PC-3 (cell line): ENCODE measurements at regions of chr18 and their contacts with region 1.

Region 1: GRCh38 chr18:6747646-6748045 is 18.1 kb downstream of the ARHGAP28 start:
- DNase-seq: peak; percentile 95
- ATAC-seq: peak; percentile 98
- H3K4me3 ChIP-seq: no peak overlapping the region
- H3K27ac ChIP-seq: peak overlapping the region; percentile 46
- H3K4me1 ChIP-seq: peaks cover 31% of the 10 kb centered on the region
- H3K27me3 ChIP-seq: no peaks in the 10 kb centered on the region
- CTCF ChIP-seq: no peak

Region 2: DNA sequence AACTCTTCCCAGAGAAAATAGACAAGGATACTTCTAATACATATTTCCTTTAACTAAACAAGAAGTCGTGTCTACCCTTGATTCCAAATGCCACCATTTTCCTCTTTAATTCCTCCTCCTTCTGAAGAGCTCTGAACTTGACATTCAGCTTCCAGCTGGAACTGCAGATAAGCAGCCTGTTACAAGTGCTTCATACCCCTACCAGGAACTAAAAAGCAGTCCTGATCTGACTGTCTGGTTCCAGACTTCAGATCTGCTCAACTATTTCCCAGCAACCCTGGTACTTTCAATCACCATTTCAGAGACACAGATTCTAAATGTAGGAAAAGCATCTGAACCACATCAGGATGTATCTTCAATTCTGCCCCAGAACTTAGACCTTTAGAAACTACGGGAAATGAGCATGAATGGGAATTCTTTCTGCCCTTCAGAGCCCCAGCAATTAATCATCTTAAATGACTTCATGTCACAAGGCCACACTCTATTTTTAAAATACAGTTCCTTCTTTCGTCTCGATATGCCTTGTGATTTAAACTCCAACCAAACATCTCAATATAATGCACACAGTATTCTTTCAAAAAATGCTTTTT is 492.4 kb before region 1 on chr18:
- CTCF ChIA-PET with region 1: no interaction called
- POLR2A ChIA-PET with region 1: no interaction called
- intact Hi-C with region 1: no loop called
- DNase-seq: no peak
- ATAC-seq: no peak
- H3K4me3 ChIP-seq: no peak overlapping the region
- H3K27ac ChIP-seq: no peak overlapping the region
- H3K4me1 ChIP-seq: no peaks in the 10 kb centered on the region
- H3K27me3 ChIP-seq: no peaks in the 10 kb centered on the region
- CTCF ChIP-seq: no peak

Region 3: DNA sequence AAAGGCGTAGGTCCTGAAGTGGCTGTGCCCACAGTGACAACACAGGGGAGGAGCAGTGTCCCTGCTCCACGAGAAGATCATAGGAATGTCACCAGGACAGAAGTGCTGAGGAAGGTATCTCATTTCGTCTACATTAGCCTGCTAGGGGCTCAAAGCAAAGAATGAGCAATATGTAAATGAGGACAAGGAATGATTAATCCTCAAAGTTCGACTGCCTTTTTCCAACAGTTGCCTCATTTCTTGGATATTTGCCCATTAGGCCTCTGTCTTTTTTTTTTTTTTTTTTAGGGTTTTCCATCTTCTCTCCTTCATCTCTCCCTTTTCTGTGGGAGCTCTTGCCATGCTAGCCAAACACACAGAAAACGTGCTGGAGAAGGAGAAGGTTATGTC is 123.4 kb before region 1 on chr18:
- CTCF ChIA-PET with region 1: no interaction called
- POLR2A ChIA-PET with region 1: no interaction called
- intact Hi-C with region 1: no loop called
- DNase-seq: peak; percentile 74
- ATAC-seq: peak; percentile 93
- H3K4me3 ChIP-seq: no peak overlapping the region
- H3K27ac ChIP-seq: no peak overlapping the region
- H3K4me1 ChIP-seq: peaks cover 12% of the 10 kb centered on the region
- H3K27me3 ChIP-seq: no peaks in the 10 kb centered on the region
- CTCF ChIP-seq: no peak

Region 4: DNA sequence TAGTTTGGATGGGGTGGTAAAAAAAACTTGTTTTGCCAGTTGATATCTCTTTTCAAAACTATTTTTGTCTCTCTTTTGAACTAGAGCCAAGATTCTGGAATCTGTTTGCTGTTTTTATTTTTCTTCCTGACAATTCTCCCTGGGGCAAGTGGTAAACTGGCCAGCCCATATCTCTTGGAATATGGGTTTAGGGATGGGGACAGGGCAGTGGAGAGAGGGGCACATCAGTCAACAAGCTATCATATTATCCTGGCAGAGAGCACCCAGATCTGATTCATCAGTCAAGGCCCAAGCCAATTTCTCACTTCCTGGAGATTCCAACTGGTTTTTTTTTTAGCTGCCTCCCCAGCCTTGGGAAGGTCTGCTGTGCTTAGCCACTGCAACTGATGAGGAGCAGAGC is 34.1 kb after region 1 on chr18:
- CTCF ChIA-PET with region 1: no interaction called
- POLR2A ChIA-PET with region 1: no interaction called
- intact Hi-C with region 1: loop called (anchors 5 kb)
- DNase-seq: peak; percentile 90
- ATAC-seq: peak; percentile 94
- H3K4me3 ChIP-seq: peak overlapping the region; percentile 37; the same call in 1 of the 2 replicates
- H3K27ac ChIP-seq: peak overlapping the region; percentile 67
- H3K4me1 ChIP-seq: peaks cover 20% of the 10 kb centered on the region
- H3K27me3 ChIP-seq: no peaks in the 10 kb centered on the region
- CTCF ChIP-seq: no peak

Region 5: GRCh38 chr18:6874316-6874715 is 126.7 kb after region 1 on chr18:
- CTCF ChIA-PET with region 1: no interaction called
- POLR2A ChIA-PET with region 1: interaction called, 10 read pairs
- intact Hi-C with region 1: no loop called
- DNase-seq: peak; percentile 44
- ATAC-seq: peak; percentile 46; the same call in 1 of the 2 replicates
- H3K4me3 ChIP-seq: no peak overlapping the region
- H3K27ac ChIP-seq: no peak overlapping the region
- H3K4me1 ChIP-seq: no peaks in the 10 kb centered on the region
- H3K27me3 ChIP-seq: no peaks in the 10 kb centered on the region
- CTCF ChIP-seq: peak; percentile 63

Region 6: DNA sequence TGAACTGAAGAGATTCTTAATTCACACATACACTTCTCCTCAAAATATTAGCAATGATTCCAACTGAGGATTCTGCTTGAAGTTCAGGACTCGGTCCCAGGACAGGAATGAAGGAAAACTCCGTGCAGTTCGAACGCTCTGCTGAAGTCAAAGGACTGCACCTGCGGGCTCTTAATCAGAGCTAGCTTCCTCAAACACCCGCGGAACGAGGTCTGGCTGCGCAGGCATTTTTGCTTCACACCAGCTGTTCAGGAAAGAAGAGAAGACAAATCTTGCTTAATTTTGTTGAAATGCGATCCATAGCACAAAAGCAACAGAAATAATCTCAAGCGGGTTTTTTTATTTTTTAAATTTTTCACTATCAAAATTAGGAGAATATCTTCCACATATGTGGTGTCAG is 194.3 kb after region 1 on chr18:
- CTCF ChIA-PET with region 1: no interaction called
- POLR2A ChIA-PET with region 1: no interaction called
- intact Hi-C with region 1: no loop called
- DNase-seq: no peak
- ATAC-seq: no peak
- H3K4me3 ChIP-seq: no peak overlapping the region
- H3K27ac ChIP-seq: no peak overlapping the region
- H3K4me1 ChIP-seq: no peaks in the 10 kb centered on the region
- H3K27me3 ChIP-seq: peaks cover 83% of the 10 kb centered on the region
- CTCF ChIP-seq: no peak